Activated B cell treated with CpG ODN at 0.5 μM for 24 hours (primary cell): ENCODE measurements at regions of chr7 and their contacts with region 1.

Region 1: GRCh38 chr7:21945454-21946227 is at the start of gene CDCA7L:
- DNase-seq: peak; percentile 80
- ATAC-seq: peak; percentile 77
- H3K4me3 Mint-ChIP-seq: peak within 1 kb of the TSS; percentile 94
- H3K27ac Mint-ChIP-seq: peak within 1 kb of the TSS; percentile 96
- H3K4me1 Mint-ChIP-seq: peaks cover 70% of the 10 kb centered on the region
- H3K27me3 Mint-ChIP-seq: no peaks in the 10 kb centered on the region
- CTCF ChIP-seq: no peak
- total RNA-seq, gene CDCA7L: 69.8 and 70.3 TPM in 2 replicates

Region 2: DNA sequence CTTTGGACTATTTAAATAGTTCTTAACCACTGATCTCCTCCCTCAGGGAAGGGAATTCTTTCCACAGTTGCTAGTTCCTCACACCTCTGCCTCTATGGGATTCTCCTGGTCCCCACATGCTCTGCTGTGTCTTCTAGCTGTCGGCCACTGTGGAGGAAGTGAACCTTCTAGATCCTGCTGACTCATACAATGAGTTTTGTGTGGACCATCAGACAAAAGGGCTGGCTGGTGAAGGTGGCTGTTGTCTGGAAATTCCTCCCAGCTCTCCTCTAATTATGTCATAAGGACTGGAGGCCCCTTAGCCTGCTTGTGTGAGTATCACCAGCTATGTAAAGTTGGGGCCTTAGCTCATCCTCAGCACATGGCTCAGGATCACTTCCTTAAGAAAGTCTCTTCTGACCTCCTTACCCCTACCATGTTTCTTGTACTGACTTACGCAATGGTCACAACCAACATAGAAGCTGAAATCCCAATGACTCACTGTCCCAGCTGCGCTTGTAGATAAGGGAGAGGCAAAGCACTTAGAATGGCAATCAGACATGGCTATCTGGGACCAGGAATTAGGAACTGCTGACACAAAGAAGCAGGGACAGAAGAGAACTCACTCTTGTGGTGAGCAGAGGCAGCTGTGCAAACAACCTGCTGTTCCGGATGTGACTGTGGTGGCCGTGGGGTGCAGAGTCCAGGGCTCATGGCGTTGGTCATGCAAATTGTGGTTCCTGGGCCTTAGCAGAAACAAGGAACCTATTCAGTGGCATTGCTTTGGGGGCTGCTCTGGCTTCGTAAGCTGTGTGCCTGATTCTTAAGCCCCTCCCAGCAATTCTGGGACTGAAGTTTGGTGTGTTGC is 1726.0 kb before region 1 on chr7:
- CTCF ChIA-PET with region 1: no interaction called
- POLR2A ChIA-PET with region 1: no interaction called
- intact Hi-C with region 1: loop called (anchors 10 kb)
- DNase-seq: peak; percentile 65
- ATAC-seq: peak; percentile 73
- H3K4me3 Mint-ChIP-seq: peak overlapping the region; percentile 33
- H3K27ac Mint-ChIP-seq: peak overlapping the region; percentile 95
- H3K4me1 Mint-ChIP-seq: peaks cover 73% of the 10 kb centered on the region
- H3K27me3 Mint-ChIP-seq: no peaks in the 10 kb centered on the region
- CTCF ChIP-seq: no peak

Region 3: GRCh38 chr7:21912305-21912704 is 33.3 kb before region 1 on chr7:
- CTCF ChIA-PET with region 1: no interaction called
- POLR2A ChIA-PET with region 1: interaction called, 38 read pairs
- intact Hi-C with region 1: loop called (anchors 5 kb)
- DNase-seq: no peak
- ATAC-seq: no peak
- H3K4me3 Mint-ChIP-seq: no peak overlapping the region
- H3K27ac Mint-ChIP-seq: peak overlapping the region; percentile 74
- H3K4me1 Mint-ChIP-seq: peaks cover 43% of the 10 kb centered on the region
- H3K27me3 Mint-ChIP-seq: no peaks in the 10 kb centered on the region
- CTCF ChIP-seq: no peak

Region 4: GRCh38 chr7:22001345-22002004 is 55.8 kb after region 1 on chr7:
- CTCF ChIA-PET with region 1: no interaction called
- POLR2A ChIA-PET with region 1: no interaction called
- intact Hi-C with region 1: loop called (anchors 2 kb)
- DNase-seq: no peak
- ATAC-seq: peak; percentile 84
- H3K4me3 Mint-ChIP-seq: peak overlapping the region; percentile 39
- H3K27ac Mint-ChIP-seq: no peak overlapping the region
- H3K4me1 Mint-ChIP-seq: peaks cover 6% of the 10 kb centered on the region
- H3K27me3 Mint-ChIP-seq: peaks cover 3% of the 10 kb centered on the region
- CTCF ChIP-seq: peak; percentile 39

Region 5: DNA sequence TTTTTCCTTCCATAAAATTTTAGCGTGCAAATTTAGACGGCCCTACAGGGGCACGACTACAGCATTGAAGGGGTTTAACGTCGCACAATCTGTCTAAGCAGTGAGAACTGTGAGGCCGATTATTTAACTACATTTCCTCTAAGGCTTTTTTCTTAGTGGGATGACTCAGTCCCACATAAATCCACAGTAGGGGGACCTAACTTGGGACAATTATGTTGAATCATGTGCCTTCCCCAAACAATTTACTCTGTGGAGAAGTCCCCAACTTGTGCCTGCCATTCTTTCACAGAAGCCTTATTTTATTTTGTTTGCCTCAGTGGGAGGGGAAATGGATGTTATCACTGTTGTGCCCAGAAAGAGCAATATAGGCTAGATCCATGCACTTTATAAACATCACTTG is 80.3 kb after region 1 on chr7:
- CTCF ChIA-PET with region 1: no interaction called
- POLR2A ChIA-PET with region 1: no interaction called
- intact Hi-C with region 1: no loop called
- DNase-seq: no peak
- ATAC-seq: no peak
- H3K4me3 Mint-ChIP-seq: no peak overlapping the region
- H3K27ac Mint-ChIP-seq: no peak overlapping the region
- H3K4me1 Mint-ChIP-seq: no peaks in the 10 kb centered on the region
- H3K27me3 Mint-ChIP-seq: peaks cover 7% of the 10 kb centered on the region
- CTCF ChIP-seq: no peak

Region 6: GRCh38 chr7:22238354-22239311 is 293.0 kb after region 1 on chr7:
- CTCF ChIA-PET with region 1: no interaction called
- POLR2A ChIA-PET with region 1: no interaction called
- intact Hi-C with region 1: no loop called
- DNase-seq: no peak
- ATAC-seq: no peak
- H3K4me3 Mint-ChIP-seq: no peak overlapping the region
- H3K27ac Mint-ChIP-seq: no peak overlapping the region
- H3K4me1 Mint-ChIP-seq: no peaks in the 10 kb centered on the region
- H3K27me3 Mint-ChIP-seq: no peaks in the 10 kb centered on the region
- CTCF ChIP-seq: no peak

Region 7: DNA sequence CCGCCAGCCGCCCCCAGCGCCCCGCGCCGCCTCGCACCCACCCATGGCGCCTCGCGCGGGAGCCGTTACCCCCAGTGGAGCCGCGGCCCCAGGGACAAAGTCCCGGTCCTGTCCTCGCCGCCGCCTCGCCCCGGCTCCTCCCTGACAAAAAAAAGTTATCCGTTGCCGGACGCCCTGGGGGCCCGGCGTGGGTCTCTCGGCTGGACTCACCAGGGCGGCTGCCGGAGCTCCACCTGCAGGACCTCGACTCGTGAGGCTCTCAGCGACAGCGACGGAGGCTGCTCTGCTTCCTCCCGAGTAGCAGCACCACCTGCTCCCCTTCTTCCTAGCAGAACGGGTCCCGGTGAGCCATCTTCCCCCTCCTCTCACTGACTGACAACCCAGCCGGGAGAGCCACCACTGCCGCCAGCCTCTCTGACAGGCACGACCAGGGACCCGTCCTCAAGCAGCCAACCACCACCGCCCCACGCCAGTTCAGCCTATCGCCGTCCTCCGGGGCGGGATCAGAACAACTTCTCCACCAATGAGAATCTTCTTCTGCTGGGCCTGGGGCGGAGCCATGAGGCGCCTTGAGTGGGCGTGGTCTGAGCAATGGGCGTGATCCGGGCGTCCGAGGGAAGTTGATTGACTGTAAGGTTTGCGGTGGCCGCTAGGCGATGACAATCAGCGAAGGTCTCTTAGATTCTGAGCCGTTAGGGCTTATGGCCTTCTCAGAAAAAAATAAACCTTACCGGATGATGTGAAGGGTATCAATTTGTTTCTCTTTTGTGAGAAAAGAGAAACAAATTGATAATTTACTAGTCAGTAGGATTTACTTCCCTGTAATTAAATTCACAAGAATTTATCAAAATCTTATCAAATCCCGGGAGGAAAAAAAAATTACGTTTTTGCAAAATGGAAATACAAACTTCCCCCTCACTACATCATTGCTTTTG is 1068.3 kb after region 1 on chr7 and contains the start of gene HYCC1:
- CTCF ChIA-PET with region 1: no interaction called
- POLR2A ChIA-PET with region 1: no interaction called
- intact Hi-C with region 1: loop called (anchors 10 kb)
- DNase-seq: peak; percentile 95
- ATAC-seq: peak; percentile 96
- H3K4me3 Mint-ChIP-seq: peak within 1 kb of the TSS; percentile 99
- H3K27ac Mint-ChIP-seq: peak within 1 kb of the TSS; percentile 93
- H3K4me1 Mint-ChIP-seq: peaks cover 44% of the 10 kb centered on the region
- H3K27me3 Mint-ChIP-seq: no peaks in the 10 kb centered on the region
- CTCF ChIP-seq: no peak
- total RNA-seq, gene HYCC1: 39.9 and 41.9 TPM in 2 replicates

Region 8: DNA sequence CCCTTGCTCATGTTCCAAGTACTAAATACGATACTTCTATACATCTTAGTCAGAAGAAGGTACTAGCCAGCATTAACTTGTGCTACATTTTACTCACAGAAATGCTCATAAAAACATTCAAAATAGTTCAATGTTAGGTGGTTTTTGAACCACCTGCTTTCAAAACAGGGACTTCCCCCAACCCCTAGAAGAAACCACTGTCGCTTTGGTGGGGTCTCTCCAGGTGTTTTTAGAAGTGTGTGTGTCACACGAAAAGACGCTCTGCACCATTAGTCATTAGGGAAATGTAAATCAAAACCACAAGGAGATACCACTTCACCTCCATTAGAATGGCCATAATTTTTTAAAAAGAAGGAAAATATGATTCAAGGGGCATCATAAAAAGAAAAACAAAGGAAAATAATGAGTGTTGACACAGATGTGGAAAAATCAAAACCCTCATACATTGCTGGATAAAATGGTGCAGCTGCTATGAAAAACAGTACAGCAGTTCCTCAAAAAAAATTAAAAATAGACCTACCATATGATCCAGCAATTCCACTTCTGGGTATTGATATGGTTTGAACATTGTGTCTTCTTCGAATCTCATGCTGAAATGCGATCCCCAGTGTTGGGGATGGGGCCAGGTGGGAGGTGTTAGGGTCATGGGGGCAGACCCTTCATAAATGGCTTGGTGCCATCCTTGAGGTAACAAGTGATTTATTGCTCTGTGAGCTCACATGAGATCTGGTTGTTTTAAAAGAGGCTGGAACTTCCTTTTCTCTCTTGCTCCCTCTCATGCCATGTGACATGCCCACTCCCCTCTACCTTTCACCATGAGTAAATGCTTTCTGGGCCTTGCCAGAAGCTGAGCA is 1427.7 kb after region 1 on chr7:
- CTCF ChIA-PET with region 1: no interaction called
- POLR2A ChIA-PET with region 1: no interaction called
- intact Hi-C with region 1: loop called (anchors 10 kb)
- DNase-seq: peak; percentile 28
- ATAC-seq: peak; percentile 69
- H3K4me3 Mint-ChIP-seq: peak overlapping the region; percentile 68
- H3K27ac Mint-ChIP-seq: peak overlapping the region; percentile 94
- H3K4me1 Mint-ChIP-seq: peaks cover 70% of the 10 kb centered on the region
- H3K27me3 Mint-ChIP-seq: no peaks in the 10 kb centered on the region
- CTCF ChIP-seq: no peak